A549 (cell line): ENCODE measurements at regions of chr11 and their contacts with region 1.

Region 1: GRCh38 chr11:76680518-76681425 is 10.2 kb upstream of the LRRC32 start:
- DNase-seq: peak; percentile 73 to 88
- ATAC-seq: peak; percentile 77 to 95; a peak in 5 of 6 replicates
- H3K4me3 ChIP-seq: no peak overlapping the region
- H3K27ac ChIP-seq: peak overlapping the region in 1 of 2 experiments; percentile 63; a peak in 2 of 6 replicates
- H3K4me1 ChIP-seq: no peaks in the 10 kb centered on the region
- CTCF ChIP-seq: peak; percentile 87
- EP300 ChIP-seq: no peak
- POLR2A ChIP-seq: no peak
- RAD21 ChIP-seq: peak; percentile 88 to 90

Region 2: DNA sequence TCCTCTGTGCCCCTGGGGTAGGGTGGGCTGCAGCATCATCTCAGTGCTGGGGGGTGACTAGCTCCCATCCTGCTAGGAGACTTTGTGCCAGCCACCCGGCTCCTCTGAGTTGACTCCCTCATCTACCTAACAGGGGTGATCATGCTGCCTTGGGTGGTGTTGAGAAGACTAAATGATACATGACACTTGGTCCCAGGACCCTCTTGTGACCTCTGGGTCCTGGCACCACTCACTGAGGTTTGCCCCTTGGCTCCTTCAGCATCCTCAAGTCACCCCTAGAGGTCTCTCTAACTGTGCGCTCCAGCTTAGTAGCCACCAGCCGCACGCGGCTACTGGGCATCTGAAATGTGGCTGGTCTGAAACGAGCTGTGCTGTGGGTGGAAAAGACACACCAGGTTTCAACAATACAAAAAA is 82.3 kb before region 1 on chr11:
- CTCF ChIA-PET with region 1: interaction called, 50 read pairs
- POLR2A ChIA-PET with region 1: no interaction called
- DNase-seq: peak; percentile 64 to 73
- ATAC-seq: peak; percentile 87 to 95
- H3K4me3 ChIP-seq: no peak overlapping the region
- H3K27ac ChIP-seq: no peak overlapping the region
- H3K4me1 ChIP-seq: peaks cover 4% of the 10 kb centered on the region; the same call in 1 of the 3 replicates
- CTCF ChIP-seq: peak; percentile 65
- EP300 ChIP-seq: no peak
- POLR2A ChIP-seq: no peak
- RAD21 ChIP-seq: peak; percentile 62 to 81

Region 3: DNA sequence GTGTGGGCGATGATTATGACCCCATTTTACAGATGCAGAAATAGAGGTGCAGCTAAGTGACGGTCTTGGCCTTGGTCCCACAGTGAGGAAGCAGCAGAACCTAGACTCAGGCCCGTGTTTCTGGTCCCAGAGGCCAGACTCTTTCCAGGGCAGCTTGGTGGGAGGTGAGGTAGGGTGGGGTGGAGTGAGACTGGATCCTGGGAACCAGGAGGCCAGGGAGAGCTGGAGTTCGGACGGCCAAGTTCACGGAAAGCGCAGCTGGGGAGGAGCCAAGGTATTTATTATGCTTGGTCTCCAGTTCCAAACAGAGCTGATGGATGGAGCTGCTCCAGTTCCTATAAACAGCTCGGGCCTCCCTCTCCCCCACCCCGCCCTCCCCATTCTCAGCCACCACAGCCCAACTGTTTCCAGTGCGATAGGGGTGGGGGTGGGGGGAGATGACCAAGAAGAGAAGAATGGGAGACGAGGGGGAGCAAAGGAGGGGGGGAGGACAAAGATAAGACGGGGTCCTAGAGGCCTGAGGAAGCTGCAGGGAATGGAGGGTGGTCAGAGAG is 26.4 kb before region 1 on chr11:
- CTCF ChIA-PET with region 1: interaction called, 10 read pairs
- POLR2A ChIA-PET with region 1: no interaction called
- DNase-seq: no peak
- ATAC-seq: no peak
- H3K4me3 ChIP-seq: no peak overlapping the region
- H3K27ac ChIP-seq: no peak overlapping the region
- H3K4me1 ChIP-seq: no peaks in the 10 kb centered on the region
- CTCF ChIP-seq: no peak
- EP300 ChIP-seq: no peak
- POLR2A ChIP-seq: no peak
- RAD21 ChIP-seq: no peak

Region 4: GRCh38 chr11:76664578-76665061 is 16.2 kb before region 1 on chr11:
- CTCF ChIA-PET with region 1: interaction called, 56 read pairs
- POLR2A ChIA-PET with region 1: no interaction called
- DNase-seq: no peak
- ATAC-seq: no peak
- H3K4me3 ChIP-seq: no peak overlapping the region
- H3K27ac ChIP-seq: no peak overlapping the region
- H3K4me1 ChIP-seq: no peaks in the 10 kb centered on the region
- CTCF ChIP-seq: no peak
- EP300 ChIP-seq: no peak
- POLR2A ChIP-seq: no peak
- RAD21 ChIP-seq: no peak

Region 5: DNA sequence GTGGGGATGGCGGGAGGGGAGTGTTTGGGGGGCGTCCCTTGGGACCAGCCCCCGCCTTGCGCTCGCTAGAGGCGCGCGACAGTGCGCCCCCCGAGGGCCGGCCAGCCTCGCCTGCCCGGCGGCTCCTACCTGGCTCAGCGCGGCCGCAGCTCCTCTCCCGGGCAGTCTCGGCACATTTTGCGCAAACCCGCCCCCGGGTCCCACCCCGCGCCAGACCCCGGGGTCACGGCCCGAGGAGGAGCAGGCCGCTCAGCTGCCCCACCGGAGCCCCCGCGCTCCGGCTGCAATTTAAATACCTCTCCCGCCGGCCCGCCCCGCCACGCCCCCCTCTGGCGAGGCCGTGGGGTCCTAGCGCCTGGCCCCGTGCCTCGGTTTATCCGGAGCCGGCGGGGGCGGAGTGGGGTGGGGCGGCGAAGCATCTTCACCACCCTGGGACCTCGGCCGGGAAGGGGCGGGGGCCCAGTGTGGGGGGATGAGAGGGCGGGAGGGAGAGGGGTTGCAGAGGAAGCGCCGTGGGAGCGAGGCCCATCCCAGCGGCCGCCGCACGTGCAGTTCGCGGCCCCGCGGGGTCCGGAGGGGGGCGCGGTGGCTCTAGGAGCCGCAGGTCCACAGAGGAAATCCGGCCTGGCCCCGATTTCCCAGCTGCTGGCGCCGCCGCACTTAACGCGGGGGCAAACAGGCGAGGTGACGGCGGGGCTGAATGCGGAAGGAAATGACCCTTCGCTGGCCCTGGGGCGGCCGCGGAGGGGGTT is 10.1 kb before region 1 on chr11 and contains the start of gene LRRC32:
- CTCF ChIA-PET with region 1: interaction called, 56 read pairs
- POLR2A ChIA-PET with region 1: no interaction called
- DNase-seq: no peak
- ATAC-seq: peak in 1 of 2 experiments; percentile 52; a peak in 3 of 6 replicates
- H3K4me3 ChIP-seq: peak within 1 kb of the TSS; percentile 59
- H3K27ac ChIP-seq: peak within 1 kb of the TSS in 1 of 2 experiments; percentile 57; a peak in 3 of 6 replicates
- H3K4me1 ChIP-seq: peaks cover 8% of the 10 kb centered on the region; the same call in 1 of the 3 replicates
- CTCF ChIP-seq: no peak; the same call in 1 of the 3 replicates
- EP300 ChIP-seq: no peak
- POLR2A ChIP-seq: no peak
- RAD21 ChIP-seq: no peak
- polyA plus RNA-seq, gene LRRC32: 0.62 and 1.0 TPM in 2 replicates

Region 6: DNA sequence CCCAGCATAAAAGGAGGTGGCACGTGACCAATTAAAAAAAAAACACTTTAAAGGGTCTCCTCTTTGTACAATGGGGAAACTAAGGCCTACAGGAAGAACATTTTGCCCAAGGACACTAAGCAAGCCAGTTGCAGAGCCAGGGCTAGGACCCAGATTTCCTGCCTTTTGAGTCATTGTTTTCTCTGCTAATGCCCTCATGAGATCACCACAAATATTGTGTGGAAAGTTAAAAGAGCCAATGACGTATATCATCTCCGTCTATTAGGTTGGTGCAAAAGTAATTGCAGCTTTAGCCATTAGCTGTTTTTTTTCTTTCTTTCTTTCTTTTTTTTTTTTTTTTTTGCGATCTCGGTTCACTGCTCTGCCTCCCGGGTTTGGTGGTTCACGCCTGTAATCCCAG is 13.9 kb after region 1 on chr11:
- CTCF ChIA-PET with region 1: interaction called, 11 read pairs
- POLR2A ChIA-PET with region 1: no interaction called
- DNase-seq: peak in 1 of 2 experiments; percentile 31
- ATAC-seq: peak in 1 of 2 experiments; percentile 33; a peak in 1 of 6 replicates
- H3K4me3 ChIP-seq: no peak overlapping the region
- H3K27ac ChIP-seq: peak overlapping the region; percentile 38 to 61; a peak in 2 of 6 replicates
- H3K4me1 ChIP-seq: peaks cover 21% of the 10 kb centered on the region
- CTCF ChIP-seq: no peak
- EP300 ChIP-seq: no peak
- POLR2A ChIP-seq: no peak
- RAD21 ChIP-seq: no peak